ENCODE measurements at regions of chr16 and their contacts with region 1.

Region 1: GRCh38 chr16:71564155-71564967 is 12.5 kb downstream of the TAT start:
- DNase-seq: no peak
- ATAC-seq: peak; percentile 84
- H3K4me3 Mint-ChIP-seq: peak overlapping the region; percentile 87
- H3K27ac Mint-ChIP-seq: peak overlapping the region; percentile 96
- H3K4me1 Mint-ChIP-seq: peaks cover 46% of the 10 kb centered on the region
- H3K27me3 Mint-ChIP-seq: no peaks in the 10 kb centered on the region
- CTCF ChIP-seq: no peak

Region 2: DNA sequence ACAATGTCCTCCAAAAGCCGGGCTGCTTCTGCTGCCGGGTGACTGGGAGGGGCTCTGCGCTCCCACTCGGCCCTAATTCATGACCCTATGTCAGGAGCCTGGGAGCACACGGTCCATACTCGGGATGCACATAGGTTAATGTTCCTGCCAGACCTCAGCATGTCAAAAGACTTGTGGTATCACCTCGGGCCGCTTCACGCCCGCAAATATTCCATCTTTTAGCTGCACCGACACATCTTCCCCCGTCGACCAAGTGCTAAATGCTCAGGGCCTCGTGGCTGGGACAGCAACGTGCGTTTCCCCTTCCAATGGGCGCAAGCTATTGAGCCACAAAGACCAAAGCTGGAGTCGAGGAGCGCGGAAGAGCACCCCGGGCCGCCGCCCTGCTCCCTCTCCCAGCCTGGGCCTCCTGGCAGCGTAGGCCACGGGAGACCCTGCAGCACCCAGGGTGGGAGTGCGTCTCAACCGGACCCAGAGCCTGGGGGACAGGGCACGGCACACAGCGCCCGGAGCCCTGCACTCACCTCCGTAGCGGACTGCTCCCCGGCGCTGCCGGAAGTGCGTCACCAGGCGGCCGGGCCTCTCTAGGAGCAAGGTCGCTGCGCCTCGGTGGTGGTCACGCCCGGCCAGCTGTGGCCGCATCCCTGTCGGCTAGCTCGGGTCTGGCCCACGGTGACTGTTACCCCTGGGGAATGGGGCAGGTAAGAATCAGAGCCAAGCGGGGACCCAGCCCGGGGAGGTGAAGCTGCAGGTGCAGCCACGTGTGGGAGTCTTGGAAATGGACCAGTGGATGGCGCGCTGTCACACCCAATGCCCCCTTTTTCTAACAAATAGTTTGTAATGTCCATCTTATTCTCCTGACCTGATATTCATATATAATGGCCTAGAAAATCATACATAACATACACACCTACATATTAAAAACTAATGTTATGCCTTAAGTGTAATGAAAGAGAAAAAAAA is 102.4 kb before region 1 on chr16 and contains the start of gene ZNF23:
- CTCF ChIA-PET with region 1: no interaction called
- POLR2A ChIA-PET with region 1: interaction called, 23 read pairs
- intact Hi-C with region 1: loop called (anchors 1 kb)
- DNase-seq: peak; percentile 90
- ATAC-seq: peak; percentile 97
- H3K4me3 Mint-ChIP-seq: peak within 1 kb of the TSS; percentile 93
- H3K27ac Mint-ChIP-seq: peak within 1 kb of the TSS; percentile 94
- H3K4me1 Mint-ChIP-seq: peaks cover 22% of the 10 kb centered on the region
- H3K27me3 Mint-ChIP-seq: no peaks in the 10 kb centered on the region
- CTCF ChIP-seq: no peak
- total RNA-seq, gene ZNF23: 13.3 and 14.6 TPM in 2 replicates

Region 3: GRCh38 chr16:71610936-71611871 is 46.8 kb after region 1 on chr16:
- CTCF ChIA-PET with region 1: interaction called, 157 read pairs
- POLR2A ChIA-PET with region 1: interaction called, 120 read pairs
- intact Hi-C with region 1: loop called (anchors 1 kb)
- DNase-seq: peak; percentile 83
- ATAC-seq: peak; percentile 76
- H3K4me3 Mint-ChIP-seq: peak overlapping the region; percentile 65
- H3K27ac Mint-ChIP-seq: no peak overlapping the region
- H3K4me1 Mint-ChIP-seq: peaks cover 33% of the 10 kb centered on the region
- H3K27me3 Mint-ChIP-seq: peaks cover 9% of the 10 kb centered on the region
- CTCF ChIP-seq: no peak

Region 4: GRCh38 chr16:71808593-71809459 is 244.5 kb after region 1 on chr16 and contains the start of gene AP1G1:
- CTCF ChIA-PET with region 1: no interaction called
- POLR2A ChIA-PET with region 1: interaction called, 12 read pairs
- intact Hi-C with region 1: no loop called
- DNase-seq: peak; percentile 79
- ATAC-seq: peak; percentile 86
- H3K4me3 Mint-ChIP-seq: peak within 1 kb of the TSS; percentile 98
- H3K27ac Mint-ChIP-seq: peak within 1 kb of the TSS; percentile 100
- H3K4me1 Mint-ChIP-seq: peaks cover 35% of the 10 kb centered on the region
- H3K27me3 Mint-ChIP-seq: no peaks in the 10 kb centered on the region
- CTCF ChIP-seq: no peak
- total RNA-seq, gene AP1G1: 112 and 120 TPM in 2 replicates

Region 5: DNA sequence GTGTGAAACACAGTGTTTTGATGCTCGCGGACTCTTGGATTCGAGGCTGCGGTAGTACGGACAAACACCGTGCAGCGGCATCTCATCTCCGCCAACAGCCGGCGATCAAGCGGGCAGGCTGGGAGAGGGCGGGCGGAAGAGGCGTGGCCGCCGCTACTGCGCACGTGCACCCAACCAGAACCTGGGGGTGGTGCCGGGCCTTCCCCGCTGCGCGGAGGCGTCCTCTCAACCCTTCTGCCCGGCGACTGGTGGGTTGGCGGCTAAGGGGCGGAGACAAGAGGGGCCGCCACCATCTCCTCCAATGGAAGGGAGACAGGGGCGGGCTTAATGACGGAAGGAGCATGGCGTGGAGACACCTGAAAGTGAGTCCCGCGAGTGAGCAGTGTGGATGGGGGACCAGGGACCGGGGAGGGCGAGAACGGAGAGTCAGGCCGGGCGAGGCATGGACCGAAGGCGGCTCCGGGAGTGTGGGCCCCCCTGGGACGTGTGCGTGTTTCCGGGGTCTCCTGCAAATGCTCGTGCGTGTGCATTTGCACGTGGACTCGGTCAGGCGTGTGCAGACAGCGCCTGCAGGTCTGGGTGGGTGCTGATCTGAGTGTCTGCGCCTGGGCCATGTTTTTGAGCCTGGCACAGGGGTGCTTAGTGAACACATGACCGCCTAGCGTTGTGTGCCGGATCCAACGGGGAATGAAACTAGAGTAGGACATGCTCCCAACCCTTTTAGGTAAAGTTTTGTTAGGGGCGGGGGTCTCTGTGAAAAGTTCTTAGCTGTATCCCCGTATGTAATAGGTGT is 444.3 kb after region 1 on chr16 and contains the start of gene DHODH:
- CTCF ChIA-PET with region 1: no interaction called
- POLR2A ChIA-PET with region 1: no interaction called
- intact Hi-C with region 1: loop called (anchors 1 kb)
- DNase-seq: peak; percentile 92
- ATAC-seq: peak; percentile 98
- H3K4me3 Mint-ChIP-seq: peak within 1 kb of the TSS; percentile 91
- H3K27ac Mint-ChIP-seq: peak within 1 kb of the TSS; percentile 91
- H3K4me1 Mint-ChIP-seq: peaks cover 18% of the 10 kb centered on the region
- H3K27me3 Mint-ChIP-seq: peaks cover 2% of the 10 kb centered on the region
- CTCF ChIP-seq: no peak
- total RNA-seq, gene DHODH: 12.0 and 13.0 TPM in 2 replicates